ENCODE measurements at regions of chr1 and their contacts with region 1.

Region 1: GRCh38 chr1:15341634-15342407 is 67.9 kb upstream of the EFHD2 start:
- DNase-seq: peak; percentile 31
- H3K4me3 Mint-ChIP-seq: no peak overlapping the region
- H3K27ac Mint-ChIP-seq: peak overlapping the region; percentile 2
- H3K4me1 Mint-ChIP-seq: peaks cover 31% of the 10 kb centered on the region
- H3K27me3 Mint-ChIP-seq: peaks cover 19% of the 10 kb centered on the region

Region 2: DNA sequence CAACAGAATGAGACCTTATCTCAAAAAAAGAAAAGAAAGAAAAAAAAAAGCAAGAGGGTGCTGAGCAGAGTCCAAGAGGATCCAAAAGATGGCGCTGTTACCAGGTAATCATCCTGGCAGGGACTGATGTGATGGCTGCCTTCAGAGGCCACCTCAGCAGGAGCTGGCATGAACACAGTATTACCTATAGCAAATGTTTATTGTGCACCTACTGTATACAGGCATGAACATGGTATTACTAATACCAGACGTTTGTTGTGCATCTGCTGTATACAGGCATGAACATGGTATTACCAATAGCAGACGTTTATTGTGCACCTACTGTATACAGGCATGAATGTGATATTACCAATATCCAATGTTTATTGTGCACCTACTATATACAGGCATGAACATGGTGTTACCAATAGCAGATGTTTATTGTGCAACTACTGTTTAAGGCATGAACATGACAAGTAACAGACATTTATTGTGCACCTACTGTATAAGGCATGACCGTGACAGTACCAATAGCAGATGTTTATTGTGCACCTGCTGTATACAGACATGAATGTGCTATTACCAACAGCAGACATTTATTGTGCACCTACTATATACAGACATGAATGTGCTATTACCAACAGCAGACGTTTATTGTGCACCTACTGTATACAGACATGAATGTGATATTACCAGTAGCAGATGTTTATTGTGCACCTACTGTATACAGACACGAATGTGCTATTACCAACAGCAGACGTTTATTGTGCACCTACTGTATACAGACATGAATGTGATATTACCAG is 303.4 kb before region 1 on chr1:
- CTCF ChIA-PET with region 1: no interaction called
- POLR2A ChIA-PET with region 1: no interaction called
- intact Hi-C with region 1: no loop called
- DNase-seq: peak; percentile 31
- H3K4me3 Mint-ChIP-seq: no peak overlapping the region
- H3K27ac Mint-ChIP-seq: no peak overlapping the region
- H3K4me1 Mint-ChIP-seq: peaks cover 7% of the 10 kb centered on the region
- H3K27me3 Mint-ChIP-seq: no peaks in the 10 kb centered on the region

Region 3: DNA sequence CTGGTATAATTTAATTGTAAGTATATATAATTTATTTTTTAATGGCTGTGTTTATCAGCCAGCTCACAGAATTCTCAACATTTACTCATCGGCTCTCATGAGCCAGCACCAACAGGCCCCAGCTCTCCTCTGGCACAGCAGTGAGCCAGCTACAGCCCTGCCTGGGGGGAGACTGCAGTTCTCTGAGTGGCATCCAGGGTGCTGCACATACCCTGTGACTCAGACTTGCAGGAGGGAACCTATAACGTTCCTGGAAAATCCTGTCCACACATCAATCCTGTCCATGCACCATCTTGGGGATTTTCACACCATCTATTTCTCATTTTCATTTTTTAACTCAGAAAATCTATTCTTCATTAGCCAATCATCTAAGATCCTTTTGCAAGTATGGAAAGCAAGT is 58.3 kb before region 1 on chr1:
- CTCF ChIA-PET with region 1: no interaction called
- POLR2A ChIA-PET with region 1: no interaction called
- intact Hi-C with region 1: no loop called
- DNase-seq: no peak
- H3K4me3 Mint-ChIP-seq: no peak overlapping the region
- H3K27ac Mint-ChIP-seq: no peak overlapping the region
- H3K4me1 Mint-ChIP-seq: no peaks in the 10 kb centered on the region
- H3K27me3 Mint-ChIP-seq: peaks cover 15% of the 10 kb centered on the region

Region 4: GRCh38 chr1:15370781-15371520 is 29.1 kb after region 1 on chr1:
- CTCF ChIA-PET with region 1: no interaction called
- POLR2A ChIA-PET with region 1: no interaction called
- intact Hi-C with region 1: no loop called
- DNase-seq: no peak
- H3K4me3 Mint-ChIP-seq: no peak overlapping the region
- H3K27ac Mint-ChIP-seq: no peak overlapping the region
- H3K4me1 Mint-ChIP-seq: no peaks in the 10 kb centered on the region
- H3K27me3 Mint-ChIP-seq: no peaks in the 10 kb centered on the region

Region 5: GRCh38 chr1:15417365-15417934 is 75.6 kb after region 1 on chr1:
- CTCF ChIA-PET with region 1: no interaction called
- POLR2A ChIA-PET with region 1: interaction called, 3 read pairs
- intact Hi-C with region 1: loop called (anchors 5 kb)
- DNase-seq: peak; percentile 73
- H3K4me3 Mint-ChIP-seq: peak overlapping the region; percentile 35
- H3K27ac Mint-ChIP-seq: peak overlapping the region; percentile 71
- H3K4me1 Mint-ChIP-seq: peaks cover 58% of the 10 kb centered on the region
- H3K27me3 Mint-ChIP-seq: no peaks in the 10 kb centered on the region

Measured in activated CD4-positive, alpha-beta memory T cell treated with anti-CD3 and anti-CD28 coated beads for 36 hours (primary cell).